Panc1 (cell line): ENCODE measurements at regions of chr3 and their contacts with region 1.

Region 1: DNA sequence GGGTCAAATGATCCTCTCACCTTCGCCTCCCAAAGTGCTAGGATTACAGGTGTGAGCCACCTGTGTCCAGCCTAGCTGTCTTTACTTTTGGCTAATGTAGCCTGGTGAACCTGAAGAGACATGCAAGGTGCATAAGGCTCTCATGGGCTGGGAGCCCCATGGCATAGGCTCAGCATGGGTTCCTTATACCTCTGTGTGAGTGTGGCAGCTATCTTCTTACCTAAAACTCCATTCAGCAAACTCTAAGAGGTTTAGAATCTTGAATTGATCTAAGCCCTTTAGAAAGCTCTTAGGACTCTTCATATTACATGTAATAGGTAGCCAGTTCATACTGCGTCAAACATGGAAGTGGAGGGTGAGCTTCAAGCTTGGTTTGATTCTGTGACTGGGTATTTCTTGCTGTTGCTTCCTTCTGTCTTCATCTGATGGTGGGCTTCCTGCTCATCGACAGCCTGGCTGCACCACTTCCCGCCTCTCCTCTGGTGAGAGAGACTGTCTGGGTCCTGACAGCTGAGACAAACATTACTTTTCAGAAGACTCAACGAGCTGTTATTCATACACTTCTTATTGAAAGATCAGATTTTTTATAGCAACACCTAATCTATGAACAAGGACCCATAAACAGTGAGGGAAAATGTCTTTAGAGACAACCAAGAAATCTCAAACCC is 19.2 kb upstream of the TKT start:
- DNase-seq: no peak
- ATAC-seq: no peak
- H3K4me3 ChIP-seq: no peak overlapping the region
- H3K27ac ChIP-seq: no peak overlapping the region
- H3K4me1 ChIP-seq: peaks cover 7% of the 10 kb centered on the region; the same call in 1 of the 2 replicates
- H3K27me3 ChIP-seq: no peaks in the 10 kb centered on the region
- CTCF ChIP-seq: no peak

Region 2: GRCh38 chr3:53130179-53131061 is 144.7 kb before region 1 on chr3 and contains the start of gene RFT1:
- CTCF ChIA-PET with region 1: interaction called, 11 read pairs
- POLR2A ChIA-PET with region 1: no interaction called
- in situ Hi-C with region 1: no loop called
- intact Hi-C with region 1: no loop called
- DNase-seq: no peak
- ATAC-seq: peak; percentile 95
- H3K4me3 ChIP-seq: peak within 1 kb of the TSS; percentile 93 to 94
- H3K27ac ChIP-seq: peak within 1 kb of the TSS; percentile 94
- H3K4me1 ChIP-seq: peaks cover 8% of the 10 kb centered on the region
- H3K27me3 ChIP-seq: no peaks in the 10 kb centered on the region
- CTCF ChIP-seq: no peak
- total RNA-seq, gene RFT1: 21.0 TPM

Region 3: GRCh38 chr3:53250881-53251605 is 24.0 kb before region 1 on chr3:
- CTCF ChIA-PET with region 1: interaction called, 13 read pairs
- POLR2A ChIA-PET with region 1: no interaction called
- in situ Hi-C with region 1: no loop called
- intact Hi-C with region 1: no loop called
- DNase-seq: no peak
- ATAC-seq: no peak
- H3K4me3 ChIP-seq: peak overlapping the region in 1 of 2 experiments; percentile 27; a peak in 2 of 4 replicates
- H3K27ac ChIP-seq: 0 out of 2 replicates have a peak overlapping the region, but pooled peaks have one; percentile 34
- H3K4me1 ChIP-seq: peaks cover 32% of the 10 kb centered on the region
- H3K27me3 ChIP-seq: no peaks in the 10 kb centered on the region
- CTCF ChIP-seq: no peak

Region 4: GRCh38 chr3:54087581-54088410 is 812.7 kb after region 1 on chr3:
- CTCF ChIA-PET with region 1: no interaction called
- POLR2A ChIA-PET with region 1: no interaction called
- in situ Hi-C with region 1: no loop called
- intact Hi-C with region 1: no loop called
- DNase-seq: no peak
- ATAC-seq: no peak
- H3K4me3 ChIP-seq: no peak overlapping the region
- H3K27ac ChIP-seq: no peak overlapping the region
- H3K4me1 ChIP-seq: no peaks in the 10 kb centered on the region
- H3K27me3 ChIP-seq: peaks cover 6% of the 10 kb centered on the region
- CTCF ChIP-seq: no peak